GM23248 (cell line): ENCODE measurements at regions of chr11 and their contacts with region 1.

Region 1: DNA sequence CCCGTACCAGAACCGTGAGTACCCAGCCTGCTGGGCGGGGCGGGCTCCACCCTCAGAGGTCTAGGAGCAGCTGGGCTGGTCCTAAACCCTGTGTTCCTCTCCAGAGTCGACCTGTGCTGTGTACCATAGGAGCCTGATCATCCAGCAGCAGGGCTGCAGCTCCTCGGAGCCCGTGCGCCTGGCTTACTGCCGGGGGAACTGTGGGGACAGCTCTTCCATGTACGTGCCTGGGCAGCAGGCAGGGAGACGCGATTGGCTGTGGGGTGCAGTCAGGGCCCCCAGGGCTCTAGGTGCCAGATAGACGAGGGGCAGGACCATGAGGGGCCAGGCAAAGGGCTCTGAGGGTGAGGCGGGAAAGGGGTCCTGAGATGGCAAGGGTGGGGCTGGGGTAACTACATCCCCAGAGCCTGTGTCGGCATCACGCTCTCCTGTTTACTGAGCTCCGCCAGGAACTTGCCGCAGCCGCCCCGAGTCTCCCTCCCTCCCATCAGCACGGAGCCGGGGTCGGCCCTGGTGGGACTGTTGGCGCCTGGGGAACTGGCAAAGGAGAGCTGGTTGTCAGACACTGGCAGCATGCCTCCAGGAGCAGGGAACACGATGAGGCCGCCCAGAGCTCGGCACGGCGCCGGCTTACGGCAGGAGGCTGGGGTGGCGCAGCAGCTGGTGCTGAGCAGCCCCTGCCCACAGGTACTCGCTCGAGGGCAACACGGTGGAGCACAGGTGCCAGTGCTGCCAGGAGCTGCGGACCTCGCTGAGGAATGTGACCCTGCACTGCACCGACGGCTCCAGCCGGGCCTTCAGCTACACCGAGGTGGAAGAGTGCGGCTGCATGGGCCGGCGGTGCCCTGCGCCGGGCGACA is 22.9 kb upstream of the MUC5B start:
- DNase-seq: no peak
- H3K4me3 ChIP-seq: no peak overlapping the region
- H3K27ac ChIP-seq: no peak overlapping the region
- H3K4me1 ChIP-seq: no peaks in the 10 kb centered on the region
- H3K27me3 ChIP-seq: no peaks in the 10 kb centered on the region

Region 2: DNA sequence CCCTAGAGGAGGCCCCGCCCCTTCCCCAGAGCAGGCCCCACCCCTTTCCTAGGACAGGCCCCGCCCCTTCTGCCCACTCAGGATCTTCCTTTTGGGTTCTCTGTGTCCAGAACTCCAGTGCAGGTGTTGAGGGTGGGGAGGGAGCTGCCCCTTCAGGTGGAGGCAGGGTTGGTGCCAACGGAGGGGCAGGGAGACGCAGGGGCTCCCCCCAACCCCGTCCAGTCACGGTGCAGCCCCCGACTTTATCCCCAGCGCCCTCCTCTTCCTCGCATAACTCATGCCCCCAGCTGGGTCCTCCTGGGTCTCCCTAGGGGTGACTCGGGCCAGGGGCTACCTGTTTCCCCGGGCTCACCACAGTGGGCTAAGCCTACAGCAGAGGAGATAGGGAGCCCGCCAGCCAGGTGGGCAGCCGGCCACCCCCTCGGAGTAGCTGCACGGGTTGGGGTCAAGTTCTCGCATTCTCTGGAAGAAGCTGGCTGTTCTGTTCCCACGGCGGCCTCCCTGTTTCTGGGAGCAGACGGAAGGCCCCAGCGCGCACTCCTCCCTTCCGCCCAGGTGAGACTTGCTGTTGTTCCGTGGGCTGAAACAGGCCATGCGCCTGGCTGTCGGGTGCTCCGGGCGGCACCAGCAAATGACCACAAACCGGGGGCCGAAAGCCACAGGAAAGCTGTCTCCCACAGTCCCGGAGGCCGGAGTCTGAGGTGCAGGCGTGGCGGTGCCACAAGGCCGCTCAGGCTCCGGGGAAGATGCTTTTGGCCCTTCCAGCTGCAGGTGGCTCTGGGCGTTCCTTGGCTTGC is 86.4 kb before region 1 on chr11:
- in situ Hi-C with region 1: no loop called
- DNase-seq: no peak
- H3K4me3 ChIP-seq: no peak overlapping the region
- H3K27ac ChIP-seq: no peak overlapping the region
- H3K4me1 ChIP-seq: no peaks in the 10 kb centered on the region
- H3K27me3 ChIP-seq: peaks cover under 1% of the 10 kb centered on the region; the same call in 1 of the 2 replicates

Region 3: GRCh38 chr11:1148752-1149180 is 51.2 kb before region 1 on chr11:
- in situ Hi-C with region 1: loop called (anchors 5 kb)
- DNase-seq: no peak
- H3K4me3 ChIP-seq: no peak overlapping the region
- H3K27ac ChIP-seq: no peak overlapping the region
- H3K4me1 ChIP-seq: peaks cover 3% of the 10 kb centered on the region; the same call in 1 of the 2 replicates
- H3K27me3 ChIP-seq: peaks cover 6% of the 10 kb centered on the region

Region 4: DNA sequence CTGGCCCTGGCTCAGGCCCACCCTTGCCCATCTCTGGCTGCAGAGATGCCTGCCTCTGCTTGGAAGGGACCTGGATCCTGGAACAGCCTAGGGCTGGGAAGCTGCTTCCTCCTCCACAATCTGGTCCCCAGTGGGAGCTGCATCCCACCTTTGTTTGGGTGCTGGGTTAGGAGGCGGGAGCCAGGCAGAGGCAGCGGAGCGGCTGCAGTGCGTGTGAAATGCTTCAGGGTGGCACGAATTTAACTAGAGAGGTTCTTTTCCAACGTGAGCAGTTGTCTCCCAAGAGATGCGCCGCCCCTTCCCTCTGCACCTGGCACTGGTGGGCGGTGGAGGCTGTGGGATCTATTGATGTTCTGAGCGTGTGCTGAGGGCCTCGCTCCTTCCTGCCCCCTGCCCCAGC is 221.3 kb after region 1 on chr11:
- in situ Hi-C with region 1: no loop called
- DNase-seq: no peak
- H3K4me3 ChIP-seq: no peak overlapping the region
- H3K27ac ChIP-seq: no peak overlapping the region
- H3K4me1 ChIP-seq: no peaks in the 10 kb centered on the region
- H3K27me3 ChIP-seq: no peaks in the 10 kb centered on the region